PC-3 (cell line): ENCODE measurements at regions of chr3 and their contacts with region 1.

Region 1: DNA sequence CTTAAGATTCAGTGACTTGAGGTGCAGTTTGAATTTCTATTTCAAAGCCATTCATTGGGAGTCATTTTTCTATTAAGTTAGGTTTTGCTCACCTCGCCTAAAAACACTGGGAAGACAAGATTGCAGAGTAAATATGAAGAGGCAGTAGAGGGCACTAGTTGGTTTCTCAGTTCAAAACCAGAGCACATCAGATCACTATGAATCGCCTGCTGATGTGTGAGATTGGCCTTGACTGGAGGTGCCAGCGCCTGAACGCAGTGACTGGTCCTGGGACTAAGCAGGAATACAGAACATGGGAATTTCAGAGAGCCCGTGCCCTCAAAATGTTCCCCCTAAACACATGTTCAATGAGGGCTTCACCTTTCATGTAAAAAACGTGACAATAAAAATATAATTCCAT is 229.0 kb downstream of the ITPR1 start:
- DNase-seq: peak; percentile 78
- ATAC-seq: peak; percentile 75
- H3K4me3 ChIP-seq: no peak overlapping the region
- H3K27ac ChIP-seq: peak overlapping the region; percentile 44
- H3K4me1 ChIP-seq: peaks cover 35% of the 10 kb centered on the region
- H3K27me3 ChIP-seq: no peaks in the 10 kb centered on the region
- CTCF ChIP-seq: peak; percentile 82

Region 2: GRCh38 chr3:4508048-4508981 is 213.8 kb before region 1 on chr3:
- CTCF ChIA-PET with region 1: no interaction called
- POLR2A ChIA-PET with region 1: no interaction called
- intact Hi-C with region 1: no loop called
- DNase-seq: no peak
- ATAC-seq: no peak
- H3K4me3 ChIP-seq: no peak overlapping the region
- H3K27ac ChIP-seq: no peak overlapping the region
- H3K4me1 ChIP-seq: no peaks in the 10 kb centered on the region
- H3K27me3 ChIP-seq: no peaks in the 10 kb centered on the region
- CTCF ChIP-seq: no peak

Region 3: DNA sequence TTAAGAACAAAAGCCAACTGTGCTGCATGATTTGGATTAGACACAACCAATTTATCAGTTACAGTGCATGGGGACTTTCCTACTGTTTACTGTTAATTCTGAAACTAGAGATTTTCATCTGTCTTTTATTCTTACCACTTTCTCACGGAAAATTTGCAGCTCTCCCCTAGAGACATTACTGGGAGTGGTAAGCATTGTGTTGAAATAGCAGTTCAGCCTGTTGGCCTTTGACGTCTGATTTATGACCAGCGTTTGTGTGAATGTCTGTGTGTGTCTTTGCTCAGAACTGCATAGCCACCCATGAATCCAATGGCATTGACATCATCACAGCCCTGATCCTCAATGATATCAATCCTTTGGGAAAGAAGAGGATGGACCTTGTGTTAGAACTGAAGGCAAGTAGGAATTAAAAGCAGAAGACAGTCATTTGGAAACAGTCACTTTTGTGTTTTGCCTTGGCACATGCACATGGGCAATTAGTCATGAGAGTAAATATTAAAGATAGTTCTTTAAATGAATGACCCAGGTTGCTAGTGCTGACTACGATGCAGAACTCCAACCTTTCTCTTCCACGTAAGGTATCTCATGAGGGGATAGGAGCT is 55.0 kb after region 1 on chr3:
- CTCF ChIA-PET with region 1: no interaction called
- POLR2A ChIA-PET with region 1: no interaction called
- intact Hi-C with region 1: loop called (anchors 2 kb)
- DNase-seq: peak; percentile 24
- ATAC-seq: peak; percentile 69
- H3K4me3 ChIP-seq: no peak overlapping the region
- H3K27ac ChIP-seq: peak overlapping the region; percentile 22
- H3K4me1 ChIP-seq: peaks cover 21% of the 10 kb centered on the region
- H3K27me3 ChIP-seq: no peaks in the 10 kb centered on the region
- CTCF ChIP-seq: no peak

Region 4: DNA sequence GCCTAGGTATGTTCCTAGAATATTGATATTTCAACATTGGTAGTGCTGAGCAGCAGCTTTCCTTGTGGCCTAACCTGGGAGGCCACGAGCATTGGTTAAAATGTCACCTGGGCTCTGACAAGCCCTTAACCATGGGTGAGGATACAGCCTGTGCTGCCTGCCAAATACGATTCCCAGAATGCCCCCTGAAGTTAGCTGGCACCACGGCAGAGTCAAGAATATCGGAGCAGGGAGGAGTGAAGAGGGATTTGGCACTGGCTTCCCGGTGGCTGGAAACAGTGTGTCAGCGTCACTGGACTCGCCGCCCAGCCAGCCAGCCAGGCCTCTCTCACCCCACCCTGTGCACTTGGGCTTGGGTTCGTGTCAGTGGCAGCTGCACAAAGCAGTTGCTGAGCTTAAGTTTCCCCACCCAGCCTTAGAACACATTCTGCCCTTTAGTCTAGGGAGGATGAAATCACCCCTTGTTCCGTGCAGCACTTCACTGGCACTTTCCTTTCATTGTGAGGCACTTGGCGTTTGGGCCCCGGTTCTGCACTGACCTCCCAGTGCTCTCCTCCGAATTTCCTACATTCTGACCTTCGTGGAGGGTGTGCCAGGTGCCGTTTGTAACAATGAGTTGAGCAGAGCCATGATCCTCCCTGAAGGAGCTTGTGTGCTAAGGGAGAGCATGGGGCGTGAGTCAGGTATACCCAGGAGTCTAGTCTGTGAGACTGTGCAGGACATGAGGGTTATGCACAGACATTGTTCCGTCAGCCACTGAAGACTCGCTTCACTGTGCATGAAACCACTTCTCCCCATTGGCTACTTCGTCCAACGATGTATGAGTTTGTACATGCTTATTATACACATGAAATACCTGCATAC is 104.4 kb after region 1 on chr3:
- CTCF ChIA-PET with region 1: interaction called, 4 read pairs
- POLR2A ChIA-PET with region 1: no interaction called
- intact Hi-C with region 1: loop called (anchors 2 kb)
- DNase-seq: no peak
- ATAC-seq: no peak
- H3K4me3 ChIP-seq: no peak overlapping the region
- H3K27ac ChIP-seq: peak overlapping the region; percentile 87
- H3K4me1 ChIP-seq: peaks cover 56% of the 10 kb centered on the region
- H3K27me3 ChIP-seq: no peaks in the 10 kb centered on the region
- CTCF ChIP-seq: no peak

Region 5: DNA sequence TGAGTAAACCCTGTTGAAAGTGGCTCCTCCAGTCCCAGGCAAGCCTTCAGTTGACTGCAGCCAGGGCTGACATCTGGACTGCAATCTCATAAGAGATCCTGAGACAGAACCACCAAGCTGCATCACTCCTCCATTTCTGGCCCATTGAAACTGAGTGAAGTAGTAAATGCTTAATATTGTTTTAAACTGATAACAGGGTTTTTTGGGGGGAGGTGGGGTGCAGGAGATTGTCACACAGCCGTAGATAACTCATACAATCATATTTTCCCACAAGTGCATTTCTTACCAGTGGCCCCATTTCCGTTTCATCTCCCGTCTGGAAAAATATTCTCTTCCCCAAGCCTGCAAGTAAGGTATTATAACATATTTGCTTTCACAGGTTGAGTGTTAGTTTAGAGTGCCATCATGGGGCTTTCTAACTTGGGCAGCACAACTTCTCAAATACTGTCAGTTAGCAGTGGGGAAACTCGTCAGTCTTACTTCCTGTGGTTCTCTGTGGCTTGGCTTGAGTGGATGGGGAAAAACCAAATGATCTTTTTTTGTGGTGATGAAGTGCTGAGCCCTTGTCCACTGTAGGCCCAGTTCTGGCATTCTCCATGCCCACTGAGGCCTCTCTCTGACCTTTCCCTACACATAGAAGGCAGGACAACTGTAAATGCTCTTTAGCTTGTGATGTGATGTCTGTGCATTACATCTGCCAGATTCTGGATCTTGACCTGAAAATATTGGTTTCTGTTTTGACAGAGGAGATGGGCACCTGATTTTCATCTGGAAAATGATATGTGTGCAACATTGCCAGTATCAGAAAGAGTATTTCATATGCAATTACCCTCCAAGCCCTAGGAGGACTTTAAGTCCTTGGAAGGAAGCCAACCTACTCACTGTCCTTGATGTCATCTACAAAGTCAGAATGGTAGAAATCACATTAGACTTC is 167.1 kb after region 1 on chr3:
- CTCF ChIA-PET with region 1: interaction called, 5 read pairs
- POLR2A ChIA-PET with region 1: no interaction called
- intact Hi-C with region 1: loop called (anchors 2 kb)
- DNase-seq: peak; percentile 31
- ATAC-seq: no peak
- H3K4me3 ChIP-seq: no peak overlapping the region
- H3K27ac ChIP-seq: no peak overlapping the region
- H3K4me1 ChIP-seq: peaks cover 36% of the 10 kb centered on the region
- H3K27me3 ChIP-seq: no peaks in the 10 kb centered on the region
- CTCF ChIP-seq: no peak

Region 6: DNA sequence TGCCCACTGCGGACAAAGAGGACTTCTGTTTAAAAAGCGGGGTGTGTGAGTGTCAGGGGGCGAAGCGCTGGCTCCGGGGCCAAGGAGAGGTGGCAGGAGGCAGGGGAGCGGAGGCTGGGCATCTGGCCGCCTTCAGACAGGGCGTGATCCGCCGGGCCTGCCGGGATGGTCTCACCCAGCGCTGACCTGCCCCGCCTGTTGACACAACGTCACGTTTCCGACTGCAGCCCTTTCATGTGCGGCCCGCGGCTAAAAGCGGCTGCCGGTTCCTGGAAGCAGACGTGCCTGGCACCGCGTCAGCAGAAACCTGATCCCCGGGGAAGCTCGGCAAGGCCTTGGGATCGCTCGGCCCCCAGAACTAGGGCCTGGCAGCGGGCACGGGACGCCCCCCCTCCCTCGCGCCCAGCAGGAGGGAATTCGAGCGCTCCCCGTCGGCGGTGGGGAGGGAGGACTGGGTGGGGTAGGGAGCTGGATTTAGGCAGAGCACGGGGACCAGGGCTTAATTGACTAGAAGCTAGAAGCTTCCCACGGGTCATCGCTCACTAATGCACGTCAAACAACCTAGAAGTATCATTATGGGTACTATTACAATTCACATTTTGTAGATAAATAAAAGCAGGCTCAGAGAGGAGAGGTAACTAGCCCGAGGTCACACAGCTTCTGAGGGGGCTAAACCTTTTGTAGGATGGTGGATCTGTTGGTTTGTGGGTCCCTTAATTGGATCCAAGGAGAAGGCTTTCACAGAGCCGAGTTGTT is 264.9 kb after region 1 on chr3:
- CTCF ChIA-PET with region 1: interaction called, 12 read pairs
- POLR2A ChIA-PET with region 1: interaction called, 5 read pairs
- intact Hi-C with region 1: no loop called
- DNase-seq: peak; percentile 98
- ATAC-seq: peak; percentile 69
- H3K4me3 ChIP-seq: peak overlapping the region; percentile 35; the same call in 1 of the 2 replicates
- H3K27ac ChIP-seq: peak overlapping the region; percentile 90
- H3K4me1 ChIP-seq: peaks cover 63% of the 10 kb centered on the region
- H3K27me3 ChIP-seq: no peaks in the 10 kb centered on the region
- CTCF ChIP-seq: 0 out of 2 replicates have a peak, but pooled peaks have one; percentile 25

Region 7: DNA sequence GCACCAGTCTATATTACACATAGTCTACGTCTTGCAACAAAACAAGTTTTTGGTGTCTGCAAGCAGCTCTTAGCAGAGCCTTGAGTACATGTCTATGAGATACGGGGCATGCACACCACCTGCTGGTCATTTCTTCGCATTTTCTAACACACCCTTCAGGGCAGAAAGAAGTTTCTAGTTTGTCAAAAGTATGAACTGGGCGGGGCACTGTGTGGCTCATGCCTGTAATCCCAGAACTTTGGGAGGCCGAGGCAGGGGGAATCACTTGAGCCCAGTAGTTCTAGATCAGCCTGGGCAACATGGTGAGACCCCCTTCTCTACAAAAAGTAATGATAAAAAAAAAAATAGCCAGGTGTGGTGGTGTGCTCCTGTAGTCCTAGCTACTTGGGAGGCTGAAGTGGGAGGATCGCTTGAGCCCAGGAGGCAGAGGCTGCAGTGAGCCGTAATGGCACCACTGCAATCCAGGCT is 335.8 kb after region 1 on chr3:
- CTCF ChIA-PET with region 1: interaction called, 13 read pairs
- POLR2A ChIA-PET with region 1: no interaction called
- intact Hi-C with region 1: no loop called
- DNase-seq: peak; percentile 95
- ATAC-seq: peak; percentile 98
- H3K4me3 ChIP-seq: no peak overlapping the region
- H3K27ac ChIP-seq: peak overlapping the region; percentile 27
- H3K4me1 ChIP-seq: peaks cover 16% of the 10 kb centered on the region
- H3K27me3 ChIP-seq: no peaks in the 10 kb centered on the region
- CTCF ChIP-seq: peak; percentile 85